Left cardiac atrium (tissue), 4 donors: ENCODE measurements at regions of chr2 and their contacts with region 1.

Region 1: DNA sequence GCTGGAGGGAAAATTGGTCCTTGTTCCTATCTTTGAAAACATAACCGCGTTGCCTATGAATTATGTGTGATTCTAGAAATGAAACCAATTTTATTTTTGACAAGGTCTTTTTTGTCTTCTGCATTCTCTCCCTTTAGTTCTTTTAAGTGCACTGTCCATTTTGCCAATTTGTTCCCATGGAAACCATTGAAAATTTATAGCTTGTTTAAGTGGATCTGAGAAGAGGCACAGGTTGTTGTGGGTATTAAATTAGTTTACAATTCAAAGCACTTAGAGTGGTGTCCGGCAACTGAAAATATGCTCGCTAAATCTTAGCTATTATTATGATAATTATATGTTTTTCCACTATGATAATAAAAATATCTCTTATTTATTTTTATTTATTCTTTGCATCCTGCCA is 107.5 kb upstream of the FSHR start:
- DNase-seq: no peak
- ATAC-seq: no peak

Region 2: GRCh38 chr2:50395510-50396297 is 1133.9 kb after region 1 on chr2:
- intact Hi-C with region 1: loop called in 1 of 2 experiments (anchors 5 kb)
- DNase-seq: no peak
- ATAC-seq: no peak